K562 (cell line): ENCODE measurements at regions of chr9 and their contacts with region 1.

Region 1: GRCh38 chr9:37144762-37145161 is 24.4 kb downstream of the ZCCHC7 start:
- DNase-seq: peak in 2 of 4 experiments; percentile 16 to 45
- ATAC-seq: peak; percentile 79
- H3K4me3 ChIP-seq: no peak overlapping the region
- H3K27ac ChIP-seq: peak overlapping the region; percentile 8; the same call in 1 of the 3 replicates
- H3K4me1 ChIP-seq: peaks cover 0 to 2% of the 10 kb centered on the region in 2 experiments; a peak in 3 of 5 replicates
- H3K27me3 ChIP-seq: no peaks in the 10 kb centered on the region
- CTCF ChIP-seq: no peak
- EP300 ChIP-seq: no peak
- POLR2A ChIP-seq: no peak
- RAD21 ChIP-seq: no peak

Region 2: DNA sequence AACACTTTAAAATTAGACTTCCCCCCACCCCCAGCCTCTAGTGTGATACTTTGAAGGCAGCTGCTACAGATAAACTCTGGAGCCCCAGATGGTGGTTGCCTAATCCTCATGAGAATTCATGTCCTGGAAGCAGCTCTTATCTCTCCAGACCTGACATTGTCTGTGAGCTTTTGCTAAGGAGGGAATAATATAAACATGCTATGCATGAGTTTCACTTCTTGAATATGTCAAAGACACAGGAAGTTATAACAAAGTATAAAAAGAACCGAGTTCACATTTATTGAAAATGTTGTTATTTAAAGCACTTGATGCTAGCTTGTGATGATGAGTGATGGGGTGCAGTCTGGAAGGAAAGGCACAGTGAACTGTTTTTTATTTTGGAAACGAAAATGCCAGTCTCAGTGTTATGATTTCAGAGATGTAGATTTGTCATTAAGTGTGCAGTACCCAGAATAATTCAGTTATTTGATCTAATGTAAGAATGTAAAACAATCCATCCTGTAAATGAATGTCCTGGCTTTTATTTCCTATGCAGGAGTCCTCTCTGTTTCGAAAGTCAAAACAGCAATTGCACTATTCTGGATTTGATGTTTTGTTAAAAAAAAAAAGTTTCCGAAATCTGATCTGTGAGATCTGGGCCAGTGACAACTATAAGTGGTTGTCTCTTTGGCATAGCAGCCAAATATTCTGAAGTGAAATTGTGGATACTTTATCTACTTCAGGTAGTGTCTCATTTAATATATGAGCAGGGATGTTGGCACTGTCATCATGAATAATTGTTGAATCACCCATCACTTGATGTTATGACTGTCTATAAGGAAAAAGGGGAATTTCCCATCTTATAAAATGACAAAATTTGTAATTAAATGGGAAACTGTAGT is 52.6 kb after region 1 on chr9:
- CTCF ChIA-PET with region 1: no interaction called
- POLR2A ChIA-PET with region 1: no interaction called
- in situ Hi-C with region 1: no loop called
- intact Hi-C with region 1: loop called (anchors 5 kb)
- DNase-seq: peak; percentile 82 to 96 (median 90)
- ATAC-seq: peak; percentile 83
- H3K4me3 ChIP-seq: peak overlapping the region; percentile 5; the same call in 1 of the 2 replicates
- H3K27ac ChIP-seq: peak overlapping the region; percentile 62
- H3K4me1 ChIP-seq: peaks cover 23 to 65% of the 10 kb centered on the region in 2 experiments
- H3K27me3 ChIP-seq: no peaks in the 10 kb centered on the region
- CTCF ChIP-seq: no peak
- EP300 ChIP-seq: peak; percentile 99
- POLR2A ChIP-seq: no peak
- RAD21 ChIP-seq: no peak

Region 3: DNA sequence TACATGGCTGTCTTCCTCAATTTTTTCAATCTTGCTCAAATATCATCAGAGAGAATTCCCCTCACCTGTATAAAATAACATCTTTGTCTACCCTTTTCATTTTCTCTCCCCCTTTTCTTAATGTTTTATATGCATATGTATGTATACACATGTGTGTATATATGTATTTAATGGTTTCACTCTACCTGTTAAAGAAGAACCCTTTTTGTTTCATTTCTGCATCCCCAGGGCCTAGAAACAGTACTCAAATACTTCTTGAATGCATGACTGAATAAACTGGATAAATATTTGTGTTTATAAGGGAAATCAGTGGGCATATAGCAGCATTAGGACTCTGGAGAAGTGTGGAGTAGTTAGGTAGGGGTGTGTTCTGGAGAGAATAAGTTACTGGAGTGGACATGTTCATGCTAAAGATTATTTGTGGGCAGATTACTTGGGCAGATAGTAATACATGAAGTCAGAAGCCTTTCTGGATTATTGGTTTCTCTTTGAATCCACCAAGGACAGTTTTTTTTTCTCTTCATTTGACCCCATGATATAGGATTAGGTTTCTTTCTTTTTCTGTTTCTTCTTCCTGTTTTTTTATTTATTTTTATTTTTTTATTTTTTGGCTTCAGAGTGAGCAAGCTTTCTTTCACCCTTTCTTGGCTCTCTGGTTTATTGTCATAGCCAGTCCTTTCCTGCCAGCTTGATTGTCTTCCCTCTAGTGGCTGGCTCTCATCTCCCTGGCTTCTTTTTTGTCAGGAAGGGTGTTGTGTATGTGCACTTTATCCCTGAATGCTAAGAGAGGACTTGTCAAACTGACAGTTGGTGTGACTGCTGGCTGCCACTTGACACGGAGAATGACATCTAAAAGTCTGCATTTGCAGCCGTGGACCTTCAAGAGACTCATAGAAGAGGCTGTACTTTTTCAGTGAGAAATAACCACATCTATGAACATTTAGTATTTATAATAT is 64.9 kb after region 1 on chr9:
- CTCF ChIA-PET with region 1: no interaction called
- POLR2A ChIA-PET with region 1: no interaction called
- in situ Hi-C with region 1: no loop called
- intact Hi-C with region 1: loop called (anchors 5 kb)
- DNase-seq: peak in 2 of 4 experiments; percentile 30 to 54
- ATAC-seq: peak; percentile 78
- H3K4me3 ChIP-seq: no peak overlapping the region
- H3K27ac ChIP-seq: peak overlapping the region; percentile 51; the same call in 2 of the 3 replicates
- H3K4me1 ChIP-seq: peaks cover 6 to 8% of the 10 kb centered on the region in 2 experiments; a peak in 3 of 5 replicates
- H3K27me3 ChIP-seq: no peaks in the 10 kb centered on the region
- CTCF ChIP-seq: peak; percentile 18 to 49 (median 30); a peak in 3 of 6 replicates
- EP300 ChIP-seq: no peak
- POLR2A ChIP-seq: no peak
- RAD21 ChIP-seq: peak in 1 of 2 experiments; percentile 51; a peak in 2 of 4 replicates

Region 4: DNA sequence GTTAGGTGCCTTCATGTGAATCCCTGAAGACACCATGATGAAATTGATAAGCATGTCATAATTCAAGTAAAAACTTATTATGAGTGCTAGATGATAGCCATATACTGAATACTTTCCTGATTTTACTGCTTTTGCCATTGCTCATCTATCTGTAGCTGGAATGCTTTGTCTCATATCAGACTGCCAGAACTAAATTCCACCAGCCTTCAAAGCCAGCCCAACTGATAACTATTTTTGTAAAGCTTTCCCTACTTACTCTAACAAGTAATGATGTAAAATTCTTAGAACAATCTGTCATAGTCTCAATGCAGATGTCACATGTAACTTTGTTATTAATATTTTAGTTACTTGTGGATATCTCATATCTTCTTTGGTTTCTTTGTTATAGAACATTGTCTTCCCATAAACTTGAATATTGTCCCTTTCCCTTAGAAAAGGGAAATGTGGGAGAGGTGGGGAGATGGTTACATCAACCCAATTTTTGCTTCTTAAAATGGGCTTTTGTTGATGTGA is 103.9 kb after region 1 on chr9:
- CTCF ChIA-PET with region 1: no interaction called
- POLR2A ChIA-PET with region 1: no interaction called
- in situ Hi-C with region 1: no loop called
- intact Hi-C with region 1: loop called (anchors 5 kb)
- DNase-seq: peak in 1 of 4 experiments; percentile 38
- ATAC-seq: no peak
- H3K4me3 ChIP-seq: no peak overlapping the region
- H3K27ac ChIP-seq: peak overlapping the region; percentile 60; the same call in 2 of the 3 replicates
- H3K4me1 ChIP-seq: peaks cover 5 to 38% of the 10 kb centered on the region in 2 experiments; a peak in 4 of 5 replicates
- H3K27me3 ChIP-seq: no peaks in the 10 kb centered on the region
- CTCF ChIP-seq: no peak
- EP300 ChIP-seq: peak; percentile 15; the same call in 1 of the 2 replicates
- POLR2A ChIP-seq: no peak
- RAD21 ChIP-seq: no peak

Region 5: GRCh38 chr9:37309136-37309535 is 164.4 kb after region 1 on chr9:
- CTCF ChIA-PET with region 1: no interaction called
- POLR2A ChIA-PET with region 1: no interaction called
- in situ Hi-C with region 1: no loop called
- intact Hi-C with region 1: loop called (anchors 10 kb)
- DNase-seq: peak in 3 of 4 experiments; percentile 29 to 72 (median 62)
- ATAC-seq: peak; percentile 99
- H3K4me3 ChIP-seq: no peak overlapping the region
- H3K27ac ChIP-seq: peak overlapping the region; percentile 28; the same call in 2 of the 3 replicates
- H3K4me1 ChIP-seq: no peaks in the 10 kb centered on the region
- H3K27me3 ChIP-seq: no peaks in the 10 kb centered on the region
- CTCF ChIP-seq: peak; percentile 63 to 77 (median 73)
- EP300 ChIP-seq: no peak
- POLR2A ChIP-seq: no peak
- RAD21 ChIP-seq: peak; percentile 15 to 80; a peak in 2 of 4 replicates